Esophagus muscularis mucosa (tissue), 4 donors: ENCODE measurements at regions of chr4 and their contacts with region 1.

Region 1: DNA sequence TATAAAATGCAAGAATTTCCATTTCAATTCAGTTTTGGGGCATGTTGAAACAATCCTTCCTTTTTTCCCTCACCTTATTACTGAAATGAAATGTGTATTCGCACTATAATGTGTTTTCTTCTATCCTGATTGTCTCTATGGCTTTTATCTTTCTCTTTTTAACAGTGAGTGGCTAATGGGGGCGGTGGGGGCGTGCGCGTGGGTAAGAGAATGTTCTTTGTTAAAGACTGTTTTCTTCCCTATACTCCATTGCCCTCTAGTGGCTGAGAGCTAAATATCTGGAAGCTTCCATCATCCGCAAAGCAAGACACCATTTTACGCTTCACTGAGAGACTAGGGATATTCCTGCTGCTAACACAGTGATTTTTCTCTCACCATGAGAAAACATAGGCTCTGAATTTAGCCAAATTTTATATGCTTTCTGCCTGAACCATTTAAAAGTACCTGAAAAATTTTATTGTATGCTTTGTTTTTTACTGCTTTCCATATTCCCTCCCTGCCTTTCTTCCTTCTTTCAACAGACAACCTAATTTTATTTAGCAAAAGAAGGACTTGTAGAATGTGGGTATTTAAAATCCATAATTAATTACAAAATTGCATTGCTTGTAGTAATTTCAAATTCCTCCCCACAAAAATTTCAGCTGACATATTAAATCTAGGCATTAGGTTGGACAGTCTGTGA is 194.0 kb downstream of the GASK1B start:
- DNase-seq: no peak
- H3K4me3 ChIP-seq: peak overlapping the region in 2 of 4 donors; percentile 1 to 19
- H3K27ac ChIP-seq: no peak overlapping the region
- H3K4me1 ChIP-seq: peaks cover 0 to 6% (median 6%) of the 10 kb centered on the region in 4 donors
- H3K27me3 ChIP-seq: peaks cover 0 to 3% (median 0%) of the 10 kb centered on the region in 4 donors
- CTCF ChIP-seq: peak; percentile 68 to 88 (median 78)
- EP300 ChIP-seq: no peak
- POLR2A ChIP-seq: no peak

Region 2: GRCh38 chr4:157072002-157072401 is 906.8 kb before region 1 on chr4:
- intact Hi-C with region 1: no loop called
- DNase-seq: no peak
- H3K4me3 ChIP-seq: no peak overlapping the region
- H3K27ac ChIP-seq: no peak overlapping the region
- H3K4me1 ChIP-seq: peaks cover 0 to 15% (median 7%) of the 10 kb centered on the region in 4 donors
- H3K27me3 ChIP-seq: peaks cover 0 to 6% (median 0%) of the 10 kb centered on the region in 4 donors
- CTCF ChIP-seq: no peak
- EP300 ChIP-seq: no peak
- POLR2A ChIP-seq: no peak

Region 3: DNA sequence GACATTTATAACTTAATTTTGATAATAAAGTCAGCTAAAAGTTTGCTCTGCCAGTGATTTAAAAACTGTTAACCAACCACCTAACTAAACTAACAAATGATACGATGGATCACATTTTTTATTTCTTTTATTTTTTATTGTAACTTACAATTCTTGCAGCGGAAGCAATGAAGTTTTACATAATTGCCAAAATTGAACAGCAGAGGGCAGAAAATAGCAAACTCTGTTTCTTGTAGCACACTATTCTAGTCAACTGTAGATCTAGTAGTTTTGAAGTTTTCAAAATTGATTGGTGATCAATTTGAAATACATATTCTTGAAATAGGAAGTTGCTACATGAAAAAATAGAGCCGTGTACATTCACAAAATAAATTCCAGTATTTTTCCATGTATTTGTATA is 761.1 kb before region 1 on chr4:
- intact Hi-C with region 1: loop called (anchors 5 kb)
- DNase-seq: no peak
- H3K4me3 ChIP-seq: no peak overlapping the region
- H3K27ac ChIP-seq: no peak overlapping the region
- H3K4me1 ChIP-seq: peaks cover 0 to 23% (median 21%) of the 10 kb centered on the region in 4 donors
- H3K27me3 ChIP-seq: peaks cover 0 to 48% (median 28%) of the 10 kb centered on the region in 4 donors
- CTCF ChIP-seq: peak in 2 of 3 experiments; percentile 18 to 34
- EP300 ChIP-seq: no peak
- POLR2A ChIP-seq: no peak

Region 4: GRCh38 chr4:157591245-157591644 is 387.6 kb before region 1 on chr4:
- intact Hi-C with region 1: no loop called
- DNase-seq: no peak
- H3K4me3 ChIP-seq: no peak overlapping the region
- H3K27ac ChIP-seq: no peak overlapping the region
- H3K4me1 ChIP-seq: no peaks in the 10 kb centered on the region
- H3K27me3 ChIP-seq: no peaks in the 10 kb centered on the region
- CTCF ChIP-seq: no peak
- EP300 ChIP-seq: no peak
- POLR2A ChIP-seq: no peak

Region 5: GRCh38 chr4:157895205-157895604 is 83.6 kb before region 1 on chr4:
- intact Hi-C with region 1: no loop called
- DNase-seq: no peak
- H3K4me3 ChIP-seq: no peak overlapping the region
- H3K27ac ChIP-seq: no peak overlapping the region
- H3K4me1 ChIP-seq: no peaks in the 10 kb centered on the region
- H3K27me3 ChIP-seq: no peaks in the 10 kb centered on the region
- CTCF ChIP-seq: no peak
- EP300 ChIP-seq: no peak
- POLR2A ChIP-seq: no peak

Region 6: DNA sequence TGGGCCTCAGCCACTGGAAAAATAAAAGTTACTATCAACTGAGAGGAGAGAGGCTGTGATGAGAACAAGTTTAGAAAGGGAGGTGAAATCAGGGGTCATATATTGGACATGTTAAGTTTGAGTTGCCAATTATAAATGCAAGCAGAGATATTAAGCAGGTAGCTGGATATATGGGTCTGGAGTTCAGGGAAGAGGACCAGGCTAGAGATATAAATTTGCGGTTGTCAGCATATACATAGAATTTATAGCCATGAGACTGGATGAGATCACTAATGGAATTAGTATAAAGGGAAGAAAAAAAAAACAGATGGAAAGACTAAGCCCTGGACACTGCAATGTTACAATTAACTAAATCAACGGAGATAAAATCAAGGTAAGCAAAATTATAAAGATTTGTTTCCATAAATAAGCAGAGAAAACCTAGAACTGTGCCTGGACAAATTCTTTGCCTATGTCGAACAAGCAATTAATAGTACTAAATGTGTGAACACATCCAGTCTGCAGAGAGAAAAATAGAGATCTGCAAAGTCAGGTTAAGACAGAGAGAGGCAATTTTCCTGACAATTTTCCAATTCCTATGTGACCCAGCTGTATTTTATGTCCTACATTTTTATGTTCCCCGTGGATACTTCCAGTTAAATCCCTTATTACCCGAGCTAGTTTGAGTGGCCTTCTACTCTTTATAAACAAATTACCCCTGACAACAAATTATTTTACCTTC is 71.4 kb before region 1 on chr4:
- intact Hi-C with region 1: no loop called
- DNase-seq: no peak
- H3K4me3 ChIP-seq: no peak overlapping the region
- H3K27ac ChIP-seq: no peak overlapping the region
- H3K4me1 ChIP-seq: no peaks in the 10 kb centered on the region
- H3K27me3 ChIP-seq: no peaks in the 10 kb centered on the region
- CTCF ChIP-seq: no peak
- EP300 ChIP-seq: no peak
- POLR2A ChIP-seq: no peak